ENCODE measurements at regions of chr18 and their contacts with region 1.

Region 1: GRCh38 chr18:21335927-21336488 is 94.0 kb downstream of the GREB1L start:
- DNase-seq: no peak
- H3K4me3 ChIP-seq: no peak overlapping the region
- H3K27ac ChIP-seq: no peak overlapping the region
- H3K4me1 ChIP-seq: peaks cover 2% of the 10 kb centered on the region
- H3K27me3 ChIP-seq: peaks cover 2% of the 10 kb centered on the region
- CTCF ChIP-seq: no peak

Region 2: GRCh38 chr18:21289827-21290226 is 46.2 kb before region 1 on chr18:
- CTCF ChIA-PET with region 1: no interaction called
- dilution Hi-C with region 1: loop called (anchors 5 kb)
- in situ Hi-C with region 1: no loop called
- intact Hi-C with region 1: no loop called
- DNase-seq: no peak
- H3K4me3 ChIP-seq: no peak overlapping the region
- H3K27ac ChIP-seq: no peak overlapping the region
- H3K4me1 ChIP-seq: peaks cover 6% of the 10 kb centered on the region
- H3K27me3 ChIP-seq: peaks cover 3% of the 10 kb centered on the region
- CTCF ChIP-seq: no peak

Region 3: GRCh38 chr18:21369146-21369545 is 33.1 kb after region 1 on chr18:
- CTCF ChIA-PET with region 1: no interaction called
- dilution Hi-C with region 1: loop called (anchors 5 kb)
- in situ Hi-C with region 1: no loop called
- intact Hi-C with region 1: no loop called
- DNase-seq: no peak
- H3K4me3 ChIP-seq: no peak overlapping the region
- H3K27ac ChIP-seq: no peak overlapping the region
- H3K4me1 ChIP-seq: no peaks in the 10 kb centered on the region
- H3K27me3 ChIP-seq: peaks cover 2% of the 10 kb centered on the region
- CTCF ChIP-seq: no peak